Aorta (tissue), 5 donors: ENCODE measurements at regions of chr3 and their contacts with region 1.

Region 1: GRCh38 chr3:73100741-73101559 is 39.5 kb downstream of the EBLN2 start:
- DNase-seq: peak; percentile 83 to 90
- ATAC-seq: peak; percentile 87
- H3K4me3 ChIP-seq: no peak overlapping the region
- H3K27ac ChIP-seq: no peak overlapping the region
- H3K4me1 ChIP-seq: no peaks in the 10 kb centered on the region
- H3K27me3 ChIP-seq: no peaks in the 10 kb centered on the region

Region 2: GRCh38 chr3:71495708-71496472 is 1605.1 kb before region 1 on chr3:
- intact Hi-C with region 1: no loop called
- DNase-seq: no peak
- ATAC-seq: peak; percentile 69
- H3K4me3 ChIP-seq: no peak overlapping the region
- H3K27ac ChIP-seq: peak overlapping the region; percentile 70 to 91
- H3K4me1 ChIP-seq: peaks cover 4 to 11% of the 10 kb centered on the region in 2 donors
- H3K27me3 ChIP-seq: no peaks in the 10 kb centered on the region

Region 3: GRCh38 chr3:73365756-73366397 is 264.9 kb after region 1 on chr3:
- intact Hi-C with region 1: no loop called
- DNase-seq: peak; percentile 87 to 91
- ATAC-seq: peak; percentile 96
- H3K4me3 ChIP-seq: no peak overlapping the region
- H3K27ac ChIP-seq: no peak overlapping the region
- H3K4me1 ChIP-seq: peaks cover 0 to 3% of the 10 kb centered on the region in 2 donors
- H3K27me3 ChIP-seq: no peaks in the 10 kb centered on the region

Region 4: DNA sequence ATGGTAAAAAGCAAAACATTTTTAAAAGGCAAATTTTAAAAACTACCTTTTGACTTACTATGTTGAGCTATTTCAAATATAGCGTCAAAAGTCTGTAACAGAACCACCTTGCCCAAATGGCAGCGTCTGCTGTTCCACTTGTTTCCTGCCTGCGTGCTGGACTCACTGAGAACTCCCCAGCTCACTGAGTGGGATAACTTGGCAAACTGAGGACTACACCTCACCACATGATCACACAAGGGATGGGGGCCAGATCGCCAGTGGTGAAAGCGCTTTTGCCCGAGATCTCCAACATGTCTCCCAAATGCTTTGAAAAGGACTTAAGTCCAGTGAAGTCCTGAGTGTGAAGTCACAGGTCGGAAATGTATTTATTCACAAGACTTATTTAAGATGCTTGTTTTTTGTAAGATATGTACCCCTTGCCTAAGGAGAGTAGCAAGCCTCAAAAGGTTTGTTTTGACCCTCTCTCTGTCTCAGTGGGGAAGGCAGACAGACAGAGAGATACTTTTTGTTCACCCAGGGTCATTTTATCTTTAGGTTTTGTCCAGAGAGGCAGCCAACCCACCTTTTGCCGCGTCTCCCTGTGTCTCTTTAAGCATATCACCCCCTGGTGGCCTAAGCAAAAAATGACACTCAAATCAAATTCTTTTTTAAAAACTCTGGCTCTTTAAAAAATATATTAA is 331.2 kb after region 1 on chr3:
- intact Hi-C with region 1: loop called (anchors 2 to 5 kb)
- DNase-seq: no peak
- ATAC-seq: no peak
- H3K4me3 ChIP-seq: no peak overlapping the region
- H3K27ac ChIP-seq: no peak overlapping the region
- H3K4me1 ChIP-seq: peaks cover 0 to 2% of the 10 kb centered on the region in 2 donors
- H3K27me3 ChIP-seq: no peaks in the 10 kb centered on the region

Region 5: DNA sequence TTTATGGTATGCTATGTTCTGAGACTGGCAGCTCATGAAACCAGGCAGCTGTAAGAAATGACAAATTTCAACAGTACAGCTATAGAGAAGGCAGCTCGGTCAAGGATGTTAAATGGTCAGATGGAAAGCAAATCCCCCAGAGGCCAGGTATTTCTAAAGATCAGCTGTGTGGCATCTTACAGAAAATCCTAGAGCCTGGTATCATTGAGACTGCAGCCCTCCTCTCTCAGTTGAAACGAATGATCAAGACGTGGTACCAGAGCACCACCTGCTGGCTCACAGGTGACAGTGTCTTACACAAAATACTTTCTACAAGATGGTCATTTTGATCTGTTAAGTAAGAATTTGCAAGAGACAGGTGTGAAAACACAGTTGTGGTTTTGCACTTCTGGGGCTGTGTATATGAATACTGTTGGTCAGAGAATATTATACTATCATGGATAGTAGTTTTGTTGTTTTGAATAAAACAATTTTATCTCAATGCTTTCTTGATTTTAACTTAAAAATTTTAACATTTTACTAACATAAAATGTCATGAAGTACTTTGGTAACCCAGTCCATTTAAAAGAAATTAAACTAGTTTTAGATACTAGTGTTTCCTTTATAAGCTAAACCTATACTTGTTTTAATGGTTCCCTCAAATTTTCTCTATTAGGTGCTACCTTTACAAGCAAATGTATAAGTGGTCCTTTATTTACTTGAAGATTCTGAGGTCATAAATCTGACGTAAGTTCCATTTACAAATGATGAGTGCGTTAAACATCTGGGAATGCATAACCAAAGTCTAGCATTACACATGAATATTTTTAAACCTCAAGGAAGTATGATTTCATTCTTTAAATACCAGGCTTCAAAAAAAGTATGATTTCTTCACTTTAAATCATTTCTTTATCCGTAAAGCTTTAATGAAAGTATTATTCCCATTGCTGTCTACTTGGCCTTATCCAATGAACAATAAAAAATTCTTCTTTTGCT is 401.9 kb after region 1 on chr3:
- intact Hi-C with region 1: loop called (anchors 1 to 2 kb)
- DNase-seq: peak; percentile 73 to 87
- ATAC-seq: peak; percentile 77
- H3K4me3 ChIP-seq: no peak overlapping the region
- H3K27ac ChIP-seq: no peak overlapping the region
- H3K4me1 ChIP-seq: peaks cover 9 to 14% of the 10 kb centered on the region in 2 donors
- H3K27me3 ChIP-seq: no peaks in the 10 kb centered on the region

Region 6: DNA sequence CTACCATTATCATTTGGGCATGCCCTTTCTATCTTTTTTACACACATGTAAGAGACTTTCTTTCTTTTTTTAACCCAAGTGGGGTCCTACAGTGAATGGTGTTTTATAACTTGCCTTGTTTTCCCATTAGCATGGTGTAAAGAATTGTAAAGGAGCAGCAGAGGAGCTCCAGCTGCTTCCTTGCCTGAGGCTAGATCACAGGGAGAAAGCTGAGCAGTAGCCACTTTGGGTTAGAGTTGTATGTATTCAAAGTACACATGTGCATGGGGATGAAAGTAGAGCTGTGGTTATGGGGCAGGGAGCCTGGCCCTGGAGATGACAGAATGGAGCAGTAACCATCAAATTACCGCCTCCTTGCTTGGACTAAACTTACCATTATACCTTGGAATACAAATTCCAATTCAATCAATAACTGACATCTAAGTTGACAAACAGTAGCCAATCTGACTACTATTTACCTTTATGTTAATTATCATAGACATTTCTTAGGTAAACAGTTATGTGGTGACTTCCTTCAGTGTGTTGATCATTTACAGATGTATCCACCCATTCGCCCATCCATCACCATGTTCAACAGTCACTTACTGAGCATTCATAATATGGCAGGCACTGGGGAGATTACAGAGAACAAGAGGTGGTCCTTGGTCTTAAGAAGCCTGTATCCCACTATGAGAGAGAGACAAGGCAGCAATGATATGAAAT is 755.0 kb after region 1 on chr3:
- intact Hi-C with region 1: loop called in 1 of 2 experiments (anchors 10 kb)
- DNase-seq: no peak
- ATAC-seq: no peak
- H3K4me3 ChIP-seq: no peak overlapping the region
- H3K27ac ChIP-seq: no peak overlapping the region
- H3K4me1 ChIP-seq: no peaks in the 10 kb centered on the region
- H3K27me3 ChIP-seq: no peaks in the 10 kb centered on the region